Right ventricle myocardium inferior (tissue), 1 donor: ENCODE measurements at regions of chr10 and their contacts with region 1.

Region 1: DNA sequence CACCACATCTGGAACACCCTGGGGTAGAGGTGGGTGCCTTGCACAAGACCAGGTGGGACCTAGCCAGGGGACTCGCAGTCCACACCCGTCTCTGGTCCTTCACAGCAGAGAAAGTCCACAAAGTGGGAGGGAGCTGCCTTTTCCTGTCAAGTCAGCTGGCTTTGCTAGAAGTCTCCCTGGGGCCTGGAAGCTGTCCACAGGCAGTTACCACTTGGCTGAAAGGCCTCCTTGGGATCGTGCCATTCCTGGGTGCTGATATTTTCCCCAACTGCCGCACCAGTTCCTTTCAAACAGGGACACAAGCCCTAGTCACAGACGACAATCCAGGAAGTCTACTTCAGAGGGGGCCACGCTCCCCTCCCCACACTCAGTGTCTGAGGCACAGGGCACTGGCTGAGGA is 75.4 kb downstream of the AFAP1L2 start:
- DNase-seq: no peak
- ATAC-seq: peak; percentile 71

Region 2: DNA sequence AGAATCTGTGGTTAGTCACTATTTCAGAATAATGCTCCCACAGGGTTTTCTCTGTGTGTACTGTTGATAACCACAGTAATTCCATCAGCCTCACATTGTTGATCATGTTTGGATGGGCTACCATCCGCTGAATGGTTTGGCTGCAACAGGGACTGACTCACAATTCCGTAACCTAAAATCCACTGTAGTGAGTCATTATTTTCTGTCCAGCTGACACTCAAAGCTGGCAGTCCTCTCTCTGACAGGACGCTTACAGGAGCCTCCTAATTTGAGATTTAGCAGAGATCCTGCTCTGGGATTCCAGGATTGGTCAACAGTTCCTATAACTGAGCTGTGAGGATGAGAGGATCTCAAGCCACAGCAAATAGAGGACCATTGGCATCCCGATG is 57.1 kb before region 1 on chr10:
- intact Hi-C with region 1: loop called (anchors 5 kb)
- DNase-seq: no peak
- ATAC-seq: peak; percentile 90

Region 3: DNA sequence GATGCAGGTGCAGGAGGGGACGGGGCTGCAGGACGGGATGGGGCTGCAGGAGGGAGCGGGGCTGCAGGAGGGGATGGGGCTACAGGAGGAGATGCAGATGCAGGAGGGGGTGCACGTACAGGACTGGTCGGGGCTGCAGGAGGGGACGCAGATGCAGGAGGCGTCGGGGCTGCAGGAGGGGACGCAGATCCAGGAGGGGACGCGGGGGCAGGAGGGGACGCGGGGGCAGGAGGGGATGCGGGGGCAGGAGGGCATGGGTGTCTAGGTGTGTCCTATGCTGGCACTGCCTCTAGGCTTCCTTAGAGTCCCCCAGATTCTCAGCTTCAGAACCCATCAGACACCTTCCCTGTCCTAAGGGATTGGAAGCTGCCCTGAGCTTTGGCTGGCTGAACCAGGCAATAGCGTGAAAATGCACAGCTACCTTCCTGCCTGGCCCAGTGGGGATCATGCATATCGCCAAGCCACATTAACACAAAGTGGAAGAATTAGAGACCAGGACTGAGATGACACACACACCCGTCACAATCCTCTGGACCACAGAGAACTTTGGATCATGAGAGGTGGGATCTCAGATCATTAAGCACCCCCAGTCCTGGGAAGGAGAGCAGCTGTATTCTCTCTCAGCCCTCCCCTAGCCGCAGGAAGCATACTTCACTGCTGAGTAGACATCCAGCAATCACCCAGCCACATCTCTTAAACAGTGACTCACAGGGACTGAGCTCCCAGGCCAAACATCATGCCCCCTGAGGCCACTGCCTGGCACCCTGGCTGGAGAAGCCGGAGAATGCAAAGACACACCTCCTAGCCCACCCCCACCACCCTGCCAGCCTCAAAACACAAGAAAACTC is 22.5 kb before region 1 on chr10:
- intact Hi-C with region 1: no loop called
- DNase-seq: no peak
- ATAC-seq: no peak

Region 4: GRCh38 chr10:114403541-114404161 is 74.8 kb after region 1 on chr10:
- intact Hi-C with region 1: loop called (anchors 5 kb)
- DNase-seq: no peak
- ATAC-seq: peak; percentile 58